Dorsolateral prefrontal cortex (tissue), 120 donors: ENCODE measurements at regions of chr2 and their contacts with region 1.

Region 1: GRCh38 chr2:219294356-219295351 is 14.5 kb downstream of the PTPRN start:
- DNase-seq: peak; percentile 77 to 89 (median 82)
- H3K4me3 ChIP-seq: peak overlapping the region; percentile 29 to 79 (median 62)
- H3K27ac ChIP-seq: peak overlapping the region; percentile 55 to 100 (median 90)
- H3K27me3 ChIP-seq: no peaks in the 10 kb centered on the region
- CTCF ChIP-seq: peak; percentile 78 to 100 (median 100)

Region 2: GRCh38 chr2:219160186-219161017 is 134.3 kb before region 1 on chr2 and contains the start of gene NHEJ1:
- intact Hi-C with region 1: loop called (anchors 2 to 5 kb)
- DNase-seq: peak; percentile 93 to 97 (median 96)
- H3K4me3 ChIP-seq: peak within 1 kb of the TSS; percentile 56 to 97 (median 75)
- H3K27ac ChIP-seq: peak within 1 kb of the TSS; percentile 86 to 99 (median 96)
- H3K27me3 ChIP-seq: no peaks in the 10 kb centered on the region
- CTCF ChIP-seq: peak; percentile 91 to 100 (median 99)
- total RNA-seq, gene NHEJ1: 5.8 to 16.8 (median 10.2) TPM

Region 3: GRCh38 chr2:219229305-219230058 is 65.2 kb before region 1 on chr2 and contains the starts of genes ANKZF1 and ATG9A:
- intact Hi-C with region 1: loop called in 1 of 2 experiments (anchors 5 kb)
- DNase-seq: peak; percentile 98 to 100 (median 99)
- H3K4me3 ChIP-seq: peak within 1 kb of the TSS; percentile 58 to 98 (median 91)
- H3K27ac ChIP-seq: peak within 1 kb of the TSS; percentile 77 to 99 (median 95)
- H3K27me3 ChIP-seq: no peaks in the 10 kb centered on the region
- CTCF ChIP-seq: peak in 29 of 56 donors; percentile 3 to 56 (median 22)
- total RNA-seq, gene ANKZF1: 34.9 to 110 (median 67.6) TPM
- total RNA-seq, gene ATG9A: 65.7 to 122 (median 90.2) TPM

Region 4: DNA sequence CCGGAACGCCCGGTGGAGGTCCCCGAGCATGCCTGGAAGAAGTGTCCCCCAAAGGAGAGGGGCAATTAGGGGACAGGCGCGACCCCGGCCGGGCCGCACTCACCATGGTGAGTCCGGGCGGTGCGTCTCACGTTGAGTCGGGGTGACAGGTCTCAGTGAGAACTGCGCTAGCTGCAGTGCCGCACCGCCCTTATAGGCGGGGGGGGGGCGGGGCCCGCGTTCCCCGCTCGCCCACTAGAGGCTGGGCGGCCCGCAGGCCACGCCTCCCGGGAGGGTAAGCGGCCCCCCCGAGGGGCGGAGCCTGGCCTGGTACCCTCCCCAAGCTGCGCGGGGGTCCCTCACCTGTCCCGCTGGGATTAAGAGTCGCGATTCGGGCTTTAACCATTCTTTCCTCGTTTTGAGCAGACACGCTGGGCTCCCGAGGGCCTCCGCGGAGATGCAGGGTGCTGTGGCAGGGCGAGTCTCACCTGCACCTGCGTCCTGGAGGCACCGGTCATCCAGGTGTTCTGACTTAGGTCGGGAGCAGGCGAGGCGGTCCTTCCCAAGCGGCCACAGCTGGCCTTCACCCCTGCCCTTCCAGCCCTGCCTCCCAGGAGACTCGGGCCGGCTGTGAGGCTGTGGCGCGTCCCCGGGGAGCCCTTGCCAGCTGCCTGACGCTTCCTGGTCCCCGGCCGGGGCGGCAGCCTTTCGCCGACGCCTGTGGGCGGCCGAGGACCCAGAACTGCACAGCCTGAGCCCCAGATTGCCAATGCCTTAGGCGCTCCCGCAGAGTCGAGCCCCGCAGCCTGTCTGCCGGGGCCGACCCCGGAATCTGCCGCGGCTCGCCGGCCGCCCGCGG is 40.7 kb before region 1 on chr2 and contains the start of gene TUBA4A:
- intact Hi-C with region 1: loop called in 1 of 2 experiments (anchors 2 kb)
- DNase-seq: peak; percentile 72 to 92 (median 88)
- H3K4me3 ChIP-seq: peak within 1 kb of the TSS; percentile 53 to 99 (median 80)
- H3K27ac ChIP-seq: peak within 1 kb of the TSS in 58 of 59 donors; percentile 42 to 94 (median 84)
- H3K27me3 ChIP-seq: no peaks in the 10 kb centered on the region
- CTCF ChIP-seq: peak in 39 of 56 donors; percentile 6 to 51 (median 27)
- total RNA-seq, gene TUBA4A: 85.5 to 377 (median 243) TPM

Region 5: DNA sequence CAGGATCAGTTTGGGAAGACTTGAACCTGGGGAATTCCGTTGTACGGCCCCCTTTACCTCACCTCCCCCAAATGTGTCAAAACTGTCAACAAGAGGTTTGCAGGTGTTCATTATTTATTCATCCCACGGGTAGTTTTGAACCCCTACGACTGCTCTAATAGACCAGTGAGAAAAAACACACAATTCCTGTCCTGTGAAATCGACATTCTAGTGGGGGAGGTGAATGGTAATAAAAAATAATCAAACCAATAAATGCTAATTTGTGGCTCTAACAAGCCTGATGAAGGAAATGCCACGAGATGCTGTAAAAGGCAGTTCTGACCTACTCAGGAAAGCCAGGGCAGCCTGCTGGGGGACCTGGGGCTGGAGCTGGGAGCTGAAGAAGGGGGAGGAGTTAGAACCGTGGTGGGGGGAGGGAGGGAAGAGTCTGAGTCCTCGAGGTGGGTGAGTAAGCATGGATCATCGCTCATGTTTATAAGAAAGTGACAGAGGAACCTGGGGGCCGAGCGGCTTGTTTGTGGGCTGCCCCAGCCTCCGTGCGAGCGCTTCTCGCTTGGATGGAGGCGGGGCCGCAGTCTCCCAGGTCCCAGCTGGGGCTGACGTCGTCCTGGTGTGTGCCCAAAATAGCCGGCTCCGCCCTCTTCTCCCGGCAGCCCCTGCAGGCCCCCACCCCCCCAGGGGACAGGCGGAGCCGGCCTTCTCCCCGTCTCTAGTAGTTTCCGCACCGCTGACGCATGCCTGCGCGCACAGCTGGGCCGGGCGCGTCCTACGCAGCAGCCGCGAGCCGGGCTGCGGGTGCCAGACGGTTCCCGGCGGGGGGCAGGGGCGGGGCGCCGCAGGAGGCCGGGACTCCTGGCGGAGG is 15.8 kb before region 1 on chr2 and contains the start of gene DNAJB2:
- intact Hi-C with region 1: loop called (anchors 1 kb)
- DNase-seq: peak; percentile 98 to 99 (median 99)
- H3K4me3 ChIP-seq: peak within 1 kb of the TSS; percentile 73 to 99 (median 92)
- H3K27ac ChIP-seq: peak within 1 kb of the TSS; percentile 97 to 100 (median 100)
- H3K27me3 ChIP-seq: no peaks in the 10 kb centered on the region
- CTCF ChIP-seq: peak in 28 of 56 donors; percentile 2 to 57 (median 28)
- total RNA-seq, gene DNAJB2: 197 to 638 (median 283) TPM